ENCODE measurements at regions of chr17 and their contacts with region 1.

Region 1: DNA sequence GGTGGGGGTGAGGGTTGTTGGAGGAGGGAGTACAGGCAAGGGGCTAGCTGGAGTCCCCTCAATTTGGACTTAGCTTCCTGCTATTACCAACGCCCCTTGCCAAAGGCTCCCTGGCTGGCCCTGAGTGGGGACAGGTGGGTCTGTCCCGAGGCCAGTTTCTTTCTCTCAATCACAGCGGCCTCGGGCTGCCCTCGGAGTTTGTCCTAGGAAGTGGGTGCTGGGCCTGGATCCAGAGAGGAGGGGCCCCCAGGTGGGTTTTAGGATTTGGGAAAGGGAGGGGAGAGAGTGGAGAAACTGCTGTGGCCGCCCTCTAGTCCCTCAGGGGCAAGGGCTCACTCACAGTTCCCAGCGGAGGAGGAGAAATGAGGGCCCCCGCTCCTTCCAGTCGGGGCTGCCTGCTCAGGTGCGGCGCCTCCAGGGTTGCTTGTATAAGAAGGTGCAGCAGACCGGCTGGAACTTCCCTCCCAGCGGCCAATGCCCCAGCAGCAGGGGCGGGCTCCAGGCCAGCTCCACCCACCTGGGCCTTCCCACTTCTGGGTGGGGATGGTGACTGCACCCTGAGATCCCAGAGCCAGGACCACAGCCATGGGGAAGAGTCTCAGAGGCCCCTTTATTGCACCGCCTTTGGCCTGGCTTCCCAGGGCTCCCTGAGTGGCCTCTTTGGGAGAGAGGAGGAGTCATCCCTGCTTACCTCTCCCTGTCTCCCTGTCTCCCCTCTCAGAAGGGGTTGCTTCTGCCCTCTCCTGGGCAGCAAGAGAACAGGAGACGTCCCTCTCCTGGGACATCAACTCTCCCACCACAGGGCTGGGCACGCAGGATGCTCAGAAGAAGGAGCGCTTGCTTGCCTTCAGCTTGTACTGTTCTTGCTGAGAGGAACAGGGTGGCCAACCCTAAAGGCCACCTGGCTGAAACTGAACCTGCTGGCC is 112.0 kb upstream of the SMURF2 start:
- DNase-seq: no peak
- H3K4me3 ChIP-seq: no peak overlapping the region
- H3K4me3 Mint-ChIP-seq: no peak overlapping the region
- H3K27ac ChIP-seq: no peak overlapping the region
- H3K27ac Mint-ChIP-seq: no peak overlapping the region
- H3K4me1 ChIP-seq: peaks cover 28 to 32% of the 10 kb centered on the region in 2 donors
- H3K4me1 Mint-ChIP-seq: peaks cover 27% of the 10 kb centered on the region
- H3K27me3 ChIP-seq: peaks cover 0 to 4% of the 10 kb centered on the region in 2 donors
- H3K27me3 Mint-ChIP-seq: peaks cover 2 to 10% (median 6%) of the 10 kb centered on the region in 3 donors
- CTCF ChIP-seq: no peak

Region 2: GRCh38 chr17:64262417-64263260 is 511.5 kb before region 1 on chr17 and contains the start of gene TEX2:
- intact Hi-C with region 1: no loop called
- DNase-seq: peak in 2 of 3 donors; percentile 31 to 37
- H3K4me3 ChIP-seq: peak within 1 kb of the TSS; percentile 81 to 86 (median 82)
- H3K4me3 Mint-ChIP-seq: peak within 1 kb of the TSS; percentile 97
- H3K27ac ChIP-seq: peak within 1 kb of the TSS; percentile 54 to 83
- H3K27ac Mint-ChIP-seq: peak within 1 kb of the TSS; percentile 83 to 94 (median 91)
- H3K4me1 ChIP-seq: peaks cover 33 to 39% of the 10 kb centered on the region in 2 donors
- H3K4me1 Mint-ChIP-seq: peaks cover 42% of the 10 kb centered on the region
- H3K27me3 ChIP-seq: no peaks in the 10 kb centered on the region
- H3K27me3 Mint-ChIP-seq: peaks cover 0 to 2% (median 0%) of the 10 kb centered on the region in 3 donors
- CTCF ChIP-seq: no peak
- polyA plus RNA-seq, gene TEX2: 6.5 to 8.7 (median 7.8) TPM

Region 3: DNA sequence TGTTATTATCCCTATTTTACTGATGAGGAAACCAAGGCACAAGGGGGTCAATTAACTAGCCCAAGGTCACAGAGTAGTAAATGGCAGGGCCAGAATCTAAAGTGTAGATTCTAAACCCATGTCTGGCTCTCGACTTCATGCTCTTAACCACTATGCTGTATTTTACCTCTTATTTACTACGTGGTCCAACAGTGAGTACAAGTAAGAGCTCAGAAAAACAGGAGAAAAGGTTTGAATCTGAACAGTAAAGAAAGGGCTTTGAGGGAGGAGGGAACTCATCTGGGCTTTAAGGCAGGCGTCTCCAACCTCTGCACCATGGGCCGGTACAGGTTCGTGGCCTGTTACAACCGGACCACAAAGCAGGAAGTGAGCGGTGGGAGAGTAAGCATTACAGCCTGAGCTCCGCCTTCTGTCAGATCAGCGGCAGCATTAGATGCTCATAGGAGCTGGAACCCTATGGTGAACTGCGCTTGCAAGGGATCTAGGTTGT is 174.9 kb before region 1 on chr17:
- intact Hi-C with region 1: no loop called
- DNase-seq: peak; percentile 27 to 44 (median 35)
- H3K4me3 ChIP-seq: peak overlapping the region in 1 of 3 experiments; percentile 4
- H3K4me3 Mint-ChIP-seq: peak overlapping the region; percentile 53 to 66
- H3K27ac ChIP-seq: peak overlapping the region in 1 of 2 donors; percentile 6
- H3K27ac Mint-ChIP-seq: peak overlapping the region in 2 of 7 donors; percentile 22 to 61
- H3K4me1 ChIP-seq: peaks cover 11 to 17% of the 10 kb centered on the region in 2 donors
- H3K4me1 Mint-ChIP-seq: peaks cover 25% of the 10 kb centered on the region
- H3K27me3 ChIP-seq: no peaks in the 10 kb centered on the region
- H3K27me3 Mint-ChIP-seq: no peaks in the 10 kb centered on the region
- CTCF ChIP-seq: no peak

Region 4: GRCh38 chr17:64736804-64737492 is 37.2 kb before region 1 on chr17:
- intact Hi-C with region 1: no loop called
- DNase-seq: peak; percentile 6 to 21 (median 19)
- H3K4me3 ChIP-seq: no peak overlapping the region
- H3K4me3 Mint-ChIP-seq: no peak overlapping the region
- H3K27ac ChIP-seq: no peak overlapping the region
- H3K27ac Mint-ChIP-seq: peak overlapping the region in 2 of 7 donors; percentile 35 to 63
- H3K4me1 ChIP-seq: peaks cover 15% of the 10 kb centered on the region in 2 donors
- H3K4me1 Mint-ChIP-seq: peaks cover 21% of the 10 kb centered on the region
- H3K27me3 ChIP-seq: no peaks in the 10 kb centered on the region
- H3K27me3 Mint-ChIP-seq: no peaks in the 10 kb centered on the region
- CTCF ChIP-seq: peak; percentile 67

Region 5: DNA sequence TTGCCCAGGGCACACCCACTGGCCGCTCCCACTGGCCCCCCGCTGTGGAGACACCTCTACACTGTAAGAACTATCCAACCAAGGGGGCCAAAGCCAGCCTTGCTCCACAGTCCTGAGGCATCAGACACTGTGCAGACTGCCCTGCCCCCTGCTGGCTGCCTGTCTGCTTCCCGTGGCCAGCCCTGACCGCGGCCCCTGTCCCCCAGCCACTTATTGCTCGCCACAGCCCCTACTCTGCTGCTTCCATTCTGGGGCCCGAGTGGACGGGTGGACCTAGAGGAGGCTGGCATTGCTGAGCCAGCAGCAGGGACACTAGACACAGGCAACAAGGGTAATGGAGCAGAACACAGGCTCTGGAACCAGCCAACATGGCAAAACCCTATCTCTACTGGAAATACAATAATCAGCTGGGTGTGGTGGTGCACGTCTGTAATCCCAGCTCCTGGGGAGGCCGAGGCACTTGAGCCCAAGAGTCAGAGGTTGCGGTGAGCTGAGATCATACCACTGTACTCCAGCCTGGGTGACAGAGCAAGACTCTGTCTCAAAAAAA is 164.9 kb after region 1 on chr17:
- intact Hi-C with region 1: loop called in 1 of 2 experiments (anchors 10 kb)
- DNase-seq: peak; percentile 39 to 67 (median 61)
- H3K4me3 ChIP-seq: peak overlapping the region in 2 of 3 experiments; percentile 16 to 40
- H3K4me3 Mint-ChIP-seq: peak overlapping the region; percentile 77 to 90
- H3K27ac ChIP-seq: peak overlapping the region in 1 of 2 donors; percentile 12
- H3K27ac Mint-ChIP-seq: peak overlapping the region in 6 of 7 donors; percentile 31 to 84 (median 76)
- H3K4me1 ChIP-seq: peaks cover 7 to 9% of the 10 kb centered on the region in 2 donors
- H3K4me1 Mint-ChIP-seq: peaks cover 8% of the 10 kb centered on the region
- H3K27me3 ChIP-seq: no peaks in the 10 kb centered on the region
- H3K27me3 Mint-ChIP-seq: peaks cover 0 to 1% (median 0%) of the 10 kb centered on the region in 3 donors
- CTCF ChIP-seq: peak; percentile 88

Region 6: GRCh38 chr17:64968652-64969501 is 194.8 kb after region 1 on chr17:
- intact Hi-C with region 1: loop called in 1 of 2 experiments (anchors 10 kb)
- DNase-seq: no peak
- H3K4me3 ChIP-seq: no peak overlapping the region
- H3K4me3 Mint-ChIP-seq: no peak overlapping the region
- H3K27ac ChIP-seq: no peak overlapping the region
- H3K27ac Mint-ChIP-seq: peak overlapping the region in 3 of 7 donors; percentile 22 to 33 (median 25)
- H3K4me1 ChIP-seq: peaks cover 15 to 24% of the 10 kb centered on the region in 2 donors
- H3K4me1 Mint-ChIP-seq: peaks cover 25% of the 10 kb centered on the region
- H3K27me3 ChIP-seq: no peaks in the 10 kb centered on the region
- H3K27me3 Mint-ChIP-seq: peaks cover 0 to 1% (median 0%) of the 10 kb centered on the region in 3 donors
- CTCF ChIP-seq: no peak

Region 7: GRCh38 chr17:65198653-65199382 is 424.7 kb after region 1 on chr17:
- intact Hi-C with region 1: loop called in 1 of 2 experiments (anchors 5 kb)
- DNase-seq: peak; percentile 33 to 65 (median 51)
- H3K4me3 ChIP-seq: no peak overlapping the region
- H3K4me3 Mint-ChIP-seq: no peak overlapping the region
- H3K27ac ChIP-seq: no peak overlapping the region
- H3K27ac Mint-ChIP-seq: no peak overlapping the region
- H3K4me1 ChIP-seq: peaks cover 8 to 12% of the 10 kb centered on the region in 2 donors
- H3K4me1 Mint-ChIP-seq: peaks cover 16% of the 10 kb centered on the region
- H3K27me3 ChIP-seq: no peaks in the 10 kb centered on the region
- H3K27me3 Mint-ChIP-seq: peaks cover 0 to 5% (median 2%) of the 10 kb centered on the region in 3 donors
- CTCF ChIP-seq: peak; percentile 81